ENCODE measurements at regions of chr9 and their contacts with region 1.

Region 1: DNA sequence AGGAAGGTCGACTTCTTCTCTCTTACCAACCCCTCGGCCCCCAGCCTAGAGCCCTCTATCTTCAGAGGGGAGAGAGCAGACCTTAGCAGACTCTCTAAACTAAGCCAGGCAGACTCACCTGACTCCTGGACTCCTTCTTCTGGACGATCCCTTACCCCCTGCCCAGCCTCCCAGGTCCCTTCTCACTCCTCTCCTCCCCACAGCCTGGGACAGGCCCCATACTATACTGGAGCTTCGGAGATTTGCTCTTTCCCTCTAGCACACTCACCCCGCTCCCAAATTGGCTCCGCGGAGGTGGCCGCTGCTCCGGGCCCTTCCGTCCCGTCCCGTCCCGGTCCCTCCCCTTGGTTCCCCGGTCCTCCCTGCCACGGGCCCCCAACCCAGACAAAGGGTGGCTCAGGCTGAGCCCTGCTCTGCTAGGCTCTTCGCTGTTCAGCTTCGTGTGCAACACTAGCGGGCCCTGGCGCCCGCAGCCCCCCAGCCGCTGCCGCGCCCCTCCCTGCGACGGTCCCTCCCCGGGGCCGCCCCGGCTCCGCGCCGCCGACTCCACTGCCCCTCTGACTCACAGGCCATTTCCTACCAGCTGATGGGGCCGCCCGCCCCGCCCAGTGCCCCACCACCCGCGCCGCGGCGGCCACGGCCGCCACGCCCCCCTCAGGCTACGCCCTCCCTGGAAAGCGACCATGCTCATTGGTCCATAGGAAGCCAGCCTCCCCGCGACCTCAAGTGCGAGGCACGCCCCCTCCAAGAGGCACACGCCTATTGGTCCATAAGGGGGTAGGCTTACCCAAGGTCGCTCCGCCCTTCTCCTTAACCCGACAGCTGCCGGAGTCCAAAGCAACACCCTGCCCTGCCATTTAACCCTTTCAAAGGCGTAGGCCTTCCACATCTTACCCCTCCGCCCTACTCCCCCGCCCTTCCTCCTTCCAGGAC is 4.4 kb downstream of the ATOSB start:
- DNase-seq: peak; percentile 98
- H3K4me3 Mint-ChIP-seq: peak overlapping the region; percentile 71
- H3K27ac Mint-ChIP-seq: peak overlapping the region; percentile 85
- H3K4me1 Mint-ChIP-seq: peaks cover 49% of the 10 kb centered on the region
- H3K27me3 Mint-ChIP-seq: no peaks in the 10 kb centered on the region

Region 2: DNA sequence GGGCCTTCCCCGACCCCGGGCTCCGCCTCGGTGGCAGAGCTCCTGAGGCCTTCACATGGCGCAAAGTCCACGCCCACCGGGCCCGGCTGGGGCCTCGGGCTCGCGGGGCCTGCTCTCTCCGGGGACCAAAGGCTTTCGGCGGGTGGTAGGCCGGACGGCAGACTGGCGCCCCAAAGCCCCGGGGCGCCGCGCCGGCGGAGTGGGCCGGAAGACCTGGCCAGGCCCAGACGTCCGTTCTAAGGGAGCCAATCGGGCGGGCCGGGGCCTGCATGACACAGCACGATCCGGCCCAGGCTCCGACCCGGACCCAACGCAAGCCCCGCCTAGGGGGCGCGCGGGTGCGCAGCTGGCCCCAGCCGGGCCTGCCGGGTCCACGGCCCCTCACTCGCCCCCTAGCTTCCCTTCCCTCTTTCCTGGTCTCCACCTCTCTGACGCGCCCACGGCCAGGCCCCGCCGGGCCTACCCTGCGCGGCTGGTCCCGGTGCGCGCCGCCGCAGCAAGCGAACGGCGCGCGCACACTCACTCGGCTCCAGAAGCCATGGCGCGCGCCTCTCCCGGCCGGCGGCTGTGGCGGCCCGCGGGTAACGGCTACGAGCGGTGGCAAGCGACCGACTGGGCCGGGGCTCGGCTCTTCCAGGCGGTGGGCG is 39.3 kb before region 1 on chr9:
- intact Hi-C with region 1: loop called (anchors 1 kb)
- DNase-seq: peak; percentile 93
- H3K4me3 Mint-ChIP-seq: peak overlapping the region; percentile 95
- H3K27ac Mint-ChIP-seq: peak overlapping the region; percentile 94
- H3K4me1 Mint-ChIP-seq: peaks cover 46% of the 10 kb centered on the region
- H3K27me3 Mint-ChIP-seq: no peaks in the 10 kb centered on the region

Region 3: DNA sequence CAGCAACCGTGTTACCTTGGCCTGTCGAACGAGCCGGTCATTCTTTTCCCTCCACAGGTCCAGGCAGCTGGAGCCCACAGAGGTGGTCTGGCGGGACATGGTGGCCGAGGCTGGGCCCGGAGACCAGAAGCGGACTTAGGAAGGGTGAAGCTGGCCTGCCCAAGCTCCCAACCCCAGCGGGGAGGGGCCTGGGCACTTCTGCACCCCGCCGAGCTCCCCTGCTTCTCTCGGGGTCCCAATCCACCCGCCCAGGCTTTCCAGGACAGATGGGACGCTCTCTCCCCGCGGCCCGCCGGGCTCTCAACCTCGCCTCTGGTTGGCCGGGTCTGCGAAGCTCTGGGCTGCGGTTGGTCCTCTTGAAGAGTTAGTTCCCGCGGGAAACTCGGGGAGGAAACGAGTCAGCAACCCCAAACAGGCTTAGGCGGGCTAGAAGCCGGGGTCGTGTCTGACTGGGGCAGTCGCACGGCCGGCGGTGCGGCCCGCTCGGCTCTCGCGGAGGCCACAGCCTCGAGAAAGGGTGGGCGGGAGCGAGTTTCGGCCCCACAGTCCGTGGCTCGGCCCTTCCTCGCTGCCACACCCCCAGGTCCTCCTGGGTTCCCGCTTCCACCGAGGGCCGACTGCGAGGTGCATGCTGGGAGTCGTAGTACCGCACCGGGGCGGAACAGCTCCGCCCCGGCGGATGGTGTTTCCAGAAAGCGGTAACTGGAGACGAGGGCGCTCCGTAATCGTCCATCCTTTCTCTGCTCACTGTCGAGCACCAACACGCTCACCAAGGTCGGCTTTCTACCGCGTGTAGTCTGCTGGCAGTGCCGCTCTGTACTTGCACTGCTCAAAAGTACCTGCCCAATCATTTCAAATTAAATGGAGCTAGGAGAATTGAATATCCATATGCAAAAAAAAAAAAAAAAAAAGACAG is 31.6 kb before region 1 on chr9 and contains the start of gene FANCG:
- intact Hi-C with region 1: loop called (anchors 1 kb)
- DNase-seq: peak; percentile 96
- H3K4me3 Mint-ChIP-seq: peak within 1 kb of the TSS; percentile 99
- H3K27ac Mint-ChIP-seq: peak within 1 kb of the TSS; percentile 100
- H3K4me1 Mint-ChIP-seq: peaks cover 30% of the 10 kb centered on the region
- H3K27me3 Mint-ChIP-seq: no peaks in the 10 kb centered on the region
- total RNA-seq, gene FANCG: 114 and 122 TPM in 2 replicates

Region 4: DNA sequence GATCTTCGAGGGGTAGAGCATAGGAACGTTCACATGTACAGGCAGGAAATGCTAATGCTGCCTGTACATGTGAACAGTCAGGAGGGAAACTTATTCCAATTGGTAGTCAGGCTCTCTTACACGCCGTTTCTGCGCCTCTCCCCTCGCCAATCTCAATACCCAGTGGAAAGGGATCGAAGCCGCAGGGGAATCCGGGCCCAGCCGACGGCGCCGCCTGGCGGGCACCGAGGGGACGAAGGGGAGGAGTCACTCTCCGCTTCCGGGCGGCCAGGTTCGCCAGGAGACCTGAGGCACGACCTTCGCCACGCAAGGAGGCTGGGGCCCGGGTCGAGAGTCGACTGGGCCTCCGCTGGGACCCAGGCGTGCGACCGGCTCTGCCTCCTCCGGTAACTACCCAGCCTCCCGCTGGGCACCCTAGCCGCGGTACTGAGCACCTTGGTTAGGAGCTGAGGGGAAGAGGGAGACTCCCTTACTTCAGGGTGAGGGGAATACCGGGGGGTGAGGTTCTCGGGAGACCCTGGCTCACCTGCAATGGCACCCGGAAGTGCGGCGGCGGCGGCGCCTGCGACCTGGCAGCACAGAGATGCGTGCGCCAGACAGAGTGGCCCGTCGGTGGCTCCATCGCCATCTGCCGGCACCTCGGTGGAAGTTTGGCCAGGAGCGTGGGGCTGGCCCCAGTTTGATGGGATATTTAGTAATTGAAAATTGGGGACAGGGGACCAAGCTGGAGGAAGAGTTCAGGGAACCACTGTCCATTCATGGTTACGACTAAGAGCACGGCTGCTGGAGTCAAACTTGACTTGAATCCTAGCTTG is 15.0 kb before region 1 on chr9 and contains the start of gene PIGO:
- intact Hi-C with region 1: loop called (anchors 1 kb)
- DNase-seq: peak; percentile 97
- H3K4me3 Mint-ChIP-seq: peak within 1 kb of the TSS; percentile 91
- H3K27ac Mint-ChIP-seq: peak within 1 kb of the TSS; percentile 95
- H3K4me1 Mint-ChIP-seq: peaks cover 28% of the 10 kb centered on the region
- H3K27me3 Mint-ChIP-seq: no peaks in the 10 kb centered on the region
- total RNA-seq, gene PIGO: 32.5 and 37.2 TPM in 2 replicates

Region 5: DNA sequence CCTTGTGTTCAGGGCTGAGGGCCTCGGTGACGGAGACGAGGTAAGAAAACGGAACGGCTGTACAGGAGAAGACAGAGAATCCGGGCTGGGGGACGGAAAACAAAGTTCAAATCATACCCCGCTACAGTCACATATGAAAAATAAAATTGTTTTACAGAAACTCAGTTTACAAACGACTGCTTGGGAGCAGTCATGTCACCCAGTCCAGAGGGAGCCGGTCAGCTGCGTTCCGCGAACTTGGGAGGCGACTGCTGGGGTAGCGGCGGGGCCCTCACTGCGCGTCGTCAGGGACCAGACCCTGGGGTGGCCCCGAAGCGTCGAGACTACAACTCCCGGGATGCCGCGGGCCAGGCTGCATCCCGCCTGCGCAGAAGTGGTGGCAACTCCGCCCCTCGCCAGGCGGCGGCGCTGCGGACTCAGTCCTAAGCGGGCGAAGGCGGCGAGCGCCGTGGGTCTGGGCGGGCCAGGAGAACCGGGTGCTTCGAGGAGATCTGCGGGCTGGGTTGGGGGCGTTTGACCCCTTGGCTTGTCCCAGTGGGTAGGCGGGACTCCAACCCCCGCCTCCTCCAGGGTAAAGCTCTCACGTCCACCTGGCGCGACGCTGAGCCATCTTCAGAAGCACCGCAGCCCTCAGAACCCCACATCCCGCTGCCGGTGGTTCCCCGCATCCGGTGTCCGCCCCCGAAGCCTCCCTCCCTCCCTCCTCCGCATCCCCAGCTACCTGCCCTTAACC is 535.4 kb after region 1 on chr9:
- intact Hi-C with region 1: loop called (anchors 5 kb)
- DNase-seq: peak; percentile 98
- H3K4me3 Mint-ChIP-seq: peak overlapping the region; percentile 92
- H3K27ac Mint-ChIP-seq: peak overlapping the region; percentile 96
- H3K4me1 Mint-ChIP-seq: peaks cover 41% of the 10 kb centered on the region
- H3K27me3 Mint-ChIP-seq: no peaks in the 10 kb centered on the region

Measured in activated CD4-positive, alpha-beta T cell treated with anti-CD3 and anti-CD28 coated beads, Interleukin-2, amount 10 ng/mL, durations not matched to agents 24 days and 14 days (primary cell).